BJ (cell line): ENCODE measurements at regions of chr9 and their contacts with region 1.

Region 1: DNA sequence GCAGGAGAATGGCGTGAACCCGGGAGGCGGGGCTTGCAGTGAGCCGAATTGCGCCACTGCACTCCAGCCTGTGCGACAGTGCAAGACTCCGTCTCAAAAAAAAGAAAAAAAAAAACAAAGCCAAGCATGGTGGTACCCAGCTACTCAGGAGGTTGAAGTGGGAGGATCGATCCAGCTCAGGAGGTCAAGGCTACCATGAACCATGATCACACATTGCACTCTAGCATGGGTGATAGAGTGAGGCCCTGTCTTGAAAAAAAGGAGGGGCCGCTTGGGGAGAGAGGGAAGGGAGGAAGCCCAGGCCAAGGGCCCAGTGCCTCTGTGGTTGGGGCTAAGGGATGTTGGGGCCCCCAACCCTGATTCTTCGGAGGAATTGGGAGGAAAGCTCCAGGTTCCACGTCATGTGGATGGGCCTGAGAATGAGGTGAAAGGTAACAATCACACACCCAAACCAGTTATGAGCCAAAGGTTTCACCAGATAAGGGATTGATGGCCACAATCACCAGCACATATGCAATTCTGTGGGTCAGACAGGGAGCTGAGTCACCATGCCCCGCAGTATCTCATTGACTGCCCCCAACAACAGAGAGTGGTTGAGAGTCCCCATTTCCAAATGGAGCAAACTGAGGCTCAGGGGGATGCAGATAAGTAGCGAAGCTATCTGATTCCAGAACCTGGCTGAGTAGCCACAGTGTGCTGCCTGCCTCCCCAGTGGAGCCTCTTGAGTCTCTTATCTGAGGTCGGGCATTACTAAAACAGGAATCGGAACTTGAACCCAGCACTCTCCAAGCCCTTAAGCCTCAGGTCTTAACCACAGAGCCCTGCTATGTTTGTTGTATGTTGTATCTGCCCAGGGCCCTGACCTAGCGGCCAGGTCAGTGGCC is 20.5 kb downstream of the SWI5 start:
- DNase-seq: no peak
- H3K4me3 ChIP-seq: no peak overlapping the region
- H3K27me3 ChIP-seq: no peaks in the 10 kb centered on the region
- CTCF ChIP-seq: no peak

Region 2: GRCh38 chr9:128266868-128267590 is 29.6 kb before region 1 on chr9:
- CTCF ChIA-PET with region 1: no interaction called
- POLR2A ChIA-PET with region 1: no interaction called
- DNase-seq: no peak
- H3K4me3 ChIP-seq: no peak overlapping the region
- H3K27me3 ChIP-seq: no peaks in the 10 kb centered on the region
- CTCF ChIP-seq: no peak

Region 3: GRCh38 chr9:128286440-128286839 is 10.1 kb before region 1 on chr9:
- CTCF ChIA-PET with region 1: interaction called, 17 read pairs
- POLR2A ChIA-PET with region 1: interaction called, 3 read pairs
- DNase-seq: no peak
- H3K4me3 ChIP-seq: no peak overlapping the region
- H3K27me3 ChIP-seq: no peaks in the 10 kb centered on the region
- CTCF ChIP-seq: no peak

Region 4: GRCh38 chr9:128335161-128335560 is 38.6 kb after region 1 on chr9:
- CTCF ChIA-PET with region 1: interaction called, 15 read pairs
- POLR2A ChIA-PET with region 1: no interaction called
- DNase-seq: no peak
- H3K4me3 ChIP-seq: no peak overlapping the region
- H3K27me3 ChIP-seq: no peaks in the 10 kb centered on the region
- CTCF ChIP-seq: no peak

Region 5: DNA sequence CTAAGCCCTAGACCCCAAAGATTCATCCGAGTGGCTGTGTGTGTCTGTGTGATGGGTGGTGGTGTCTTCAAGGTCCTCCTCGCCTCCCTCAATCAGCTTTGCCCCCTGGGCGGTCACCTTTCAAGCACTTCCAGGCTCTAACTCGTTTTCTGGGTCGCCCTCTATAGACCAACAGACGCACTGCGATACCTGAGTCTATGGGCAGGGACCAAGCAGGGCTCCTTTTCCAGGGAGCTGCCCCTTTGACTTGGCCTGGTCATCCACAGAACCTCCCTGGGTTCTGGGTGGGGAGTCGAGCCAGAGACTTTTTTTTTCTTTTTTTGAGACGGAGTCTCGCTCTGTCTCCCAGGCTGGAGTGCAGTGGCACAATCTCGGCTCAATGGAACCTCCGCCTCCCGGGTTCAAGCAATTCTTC is 44.9 kb after region 1 on chr9:
- CTCF ChIA-PET with region 1: interaction called, 18 read pairs
- POLR2A ChIA-PET with region 1: no interaction called
- DNase-seq: no peak
- H3K4me3 ChIP-seq: peak overlapping the region; percentile 68
- H3K27me3 ChIP-seq: no peaks in the 10 kb centered on the region
- CTCF ChIP-seq: peak; percentile 74

Region 6: GRCh38 chr9:128361986-128362646 is 65.5 kb after region 1 on chr9:
- CTCF ChIA-PET with region 1: interaction called, 23 read pairs
- POLR2A ChIA-PET with region 1: no interaction called
- DNase-seq: peak; percentile 42
- H3K4me3 ChIP-seq: peak overlapping the region; percentile 21
- H3K27me3 ChIP-seq: no peaks in the 10 kb centered on the region
- CTCF ChIP-seq: peak; percentile 94

Region 7: DNA sequence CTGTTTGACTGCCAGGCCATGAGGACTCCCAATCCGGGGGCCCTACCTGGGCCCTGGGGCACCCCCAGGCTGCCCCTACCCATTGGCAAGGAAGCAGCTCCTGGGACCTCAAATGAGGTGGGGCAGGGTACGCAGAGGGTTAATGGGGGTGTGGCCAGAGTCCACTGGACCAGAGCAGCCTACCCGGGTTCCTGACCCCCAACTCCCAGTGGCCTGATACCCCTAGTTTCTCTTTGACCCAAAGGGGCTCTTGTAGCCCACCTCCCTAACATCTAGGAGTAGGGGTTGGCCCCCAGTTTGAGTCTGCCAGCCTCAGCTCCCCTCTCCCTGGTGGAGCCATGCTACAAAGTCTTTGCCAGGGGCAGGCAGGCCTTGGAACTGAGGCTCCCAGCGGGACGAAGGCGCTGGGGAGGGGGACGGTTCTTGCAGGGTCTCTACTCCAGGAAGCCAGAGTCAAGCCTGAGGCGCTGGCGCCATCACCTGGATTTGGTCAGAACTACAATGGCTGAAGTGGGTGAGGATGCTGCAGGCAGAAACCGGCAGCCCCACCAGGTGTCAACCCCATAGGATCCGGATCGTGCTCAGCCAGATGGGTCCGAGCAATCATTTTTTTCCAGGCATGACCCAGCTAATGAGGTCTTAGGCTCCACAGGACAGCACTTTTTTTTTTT is 115.7 kb after region 1 on chr9:
- CTCF ChIA-PET with region 1: interaction called, 33 read pairs
- POLR2A ChIA-PET with region 1: no interaction called
- DNase-seq: no peak
- H3K4me3 ChIP-seq: no peak overlapping the region
- H3K27me3 ChIP-seq: peaks cover 8% of the 10 kb centered on the region
- CTCF ChIP-seq: peak; percentile 69

Region 8: DNA sequence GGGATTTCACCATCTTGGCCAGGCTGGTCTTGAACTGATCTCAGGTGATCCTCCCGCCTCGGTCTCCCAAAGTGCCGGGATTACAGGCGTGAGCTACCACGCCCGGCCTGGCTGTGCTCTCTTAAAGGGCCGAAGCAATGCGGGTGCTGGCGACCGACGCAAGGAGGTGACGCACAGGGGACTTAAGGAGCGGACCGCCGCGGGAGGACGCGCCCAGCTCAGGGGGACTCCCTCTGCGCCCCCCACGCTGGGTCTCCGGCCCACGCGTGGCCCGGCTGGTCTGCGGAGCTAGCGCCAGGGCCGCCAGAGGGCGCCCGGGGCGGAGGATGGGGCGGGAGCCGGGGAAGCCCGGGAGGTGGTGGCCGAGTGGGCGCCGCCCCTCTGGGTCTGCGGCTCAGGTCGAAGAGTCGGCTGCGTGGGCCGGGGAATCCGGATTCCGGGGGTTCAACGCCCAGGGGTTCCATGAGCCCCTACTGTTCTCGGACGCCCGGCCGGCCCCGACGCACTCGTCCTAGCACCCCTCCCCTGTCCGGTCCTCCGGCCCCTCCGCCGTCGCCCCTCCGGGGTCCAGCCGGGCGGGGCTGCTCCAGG is 123.6 kb after region 1 on chr9:
- CTCF ChIA-PET with region 1: interaction called, 10 read pairs
- POLR2A ChIA-PET with region 1: no interaction called
- DNase-seq: no peak
- H3K4me3 ChIP-seq: peak overlapping the region; percentile 60
- H3K27me3 ChIP-seq: peaks cover 6% of the 10 kb centered on the region
- CTCF ChIP-seq: peak; percentile 60